PC-9 (cell line): ENCODE measurements at regions of chr9 and their contacts with region 1.

Region 1: DNA sequence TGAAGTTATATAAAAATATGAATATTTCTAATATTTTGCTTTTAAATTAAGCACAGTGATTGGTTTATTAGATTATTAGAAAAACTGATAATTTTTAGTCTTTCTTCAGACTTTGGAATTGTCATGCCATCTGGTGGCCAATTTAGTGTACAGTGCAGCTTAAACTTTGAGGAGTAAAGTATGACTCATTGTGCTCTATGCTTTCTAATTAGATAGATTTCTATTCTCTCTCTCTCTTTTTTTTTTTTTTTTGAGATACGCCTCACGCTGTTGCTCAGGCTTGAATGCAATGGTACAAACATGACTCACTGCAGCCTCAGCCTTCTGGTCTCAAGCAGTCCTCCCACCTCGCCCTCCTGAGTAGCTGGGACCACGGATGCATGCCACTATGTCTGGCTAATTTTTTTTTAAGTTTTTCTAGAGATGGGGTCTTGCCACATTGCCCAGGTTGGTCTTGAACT is 42.1 kb upstream of the GPR21 start:
- DNase-seq: peak; percentile 29 to 80
- H3K4me3 ChIP-seq: no peak overlapping the region
- H3K27ac ChIP-seq: no peak overlapping the region
- H3K4me1 ChIP-seq: no peaks in the 10 kb centered on the region
- H3K27me3 ChIP-seq: no peaks in the 10 kb centered on the region
- CTCF ChIP-seq: peak; percentile 82

Region 2: GRCh38 chr9:122346478-122347362 is 644.7 kb before region 1 on chr9:
- CTCF ChIA-PET with region 1: no interaction called
- POLR2A ChIA-PET with region 1: no interaction called
- intact Hi-C with region 1: no loop called
- DNase-seq: peak in 1 of 2 experiments; percentile 20
- H3K4me3 ChIP-seq: peak overlapping the region; percentile 39; the same call in 1 of the 2 replicates
- H3K27ac ChIP-seq: no peak overlapping the region
- H3K4me1 ChIP-seq: no peaks in the 10 kb centered on the region
- H3K27me3 ChIP-seq: peaks cover 24% of the 10 kb centered on the region
- CTCF ChIP-seq: no peak

Region 3: DNA sequence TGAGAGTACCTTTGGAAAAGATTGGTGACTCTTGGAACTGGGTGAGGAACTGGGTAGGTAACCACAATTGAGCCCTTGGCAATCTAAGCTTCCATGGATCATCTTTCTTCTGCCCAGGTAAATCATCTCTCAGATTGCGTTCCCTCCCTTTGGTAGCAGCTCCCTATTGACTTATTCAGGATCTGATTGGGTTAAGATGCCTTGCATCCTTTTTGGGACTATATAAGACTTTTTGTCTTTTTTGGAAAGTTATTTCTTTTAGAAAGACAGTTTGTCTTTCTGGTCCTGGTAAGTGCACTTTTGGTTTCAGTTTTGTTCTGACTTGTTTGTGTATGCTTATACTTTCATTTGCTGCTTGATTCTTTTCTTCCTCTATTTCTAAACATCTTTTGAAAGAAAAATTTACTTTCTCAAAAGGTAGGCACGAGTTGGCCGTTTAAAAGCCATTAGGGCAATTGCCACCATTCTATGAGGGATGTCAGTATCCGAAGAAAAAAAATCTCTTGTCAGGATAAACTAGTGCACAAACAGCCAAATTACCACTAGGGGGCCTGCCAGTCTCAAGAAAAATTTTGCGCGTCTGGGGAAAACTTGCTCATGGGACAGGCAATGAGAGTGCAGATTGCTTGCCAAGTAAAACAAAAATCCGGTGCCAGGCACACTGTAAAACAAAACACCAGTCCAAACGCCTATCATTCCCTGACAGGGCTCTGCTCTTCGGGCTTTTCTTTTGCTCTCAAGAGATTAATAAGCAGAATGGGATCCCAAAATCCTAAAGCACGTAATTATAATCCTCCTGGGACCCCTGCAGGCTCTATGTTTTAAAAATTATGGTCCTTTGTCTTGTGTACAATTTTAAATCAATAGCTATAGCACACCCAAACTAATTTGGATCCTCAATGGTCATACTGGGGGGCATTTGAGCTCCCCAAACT is 526.5 kb before region 1 on chr9:
- CTCF ChIA-PET with region 1: no interaction called
- POLR2A ChIA-PET with region 1: no interaction called
- intact Hi-C with region 1: loop called (anchors 1 kb)
- DNase-seq: peak; percentile 50 to 74
- H3K4me3 ChIP-seq: peak overlapping the region; percentile 51; the same call in 1 of the 2 replicates
- H3K27ac ChIP-seq: no peak overlapping the region
- H3K4me1 ChIP-seq: no peaks in the 10 kb centered on the region
- H3K27me3 ChIP-seq: peaks cover 21% of the 10 kb centered on the region; the same call in 1 of the 2 replicates
- CTCF ChIP-seq: peak; percentile 89

Region 4: GRCh38 chr9:122835313-122835731 is 156.1 kb before region 1 on chr9:
- CTCF ChIA-PET with region 1: interaction called, 11 read pairs
- POLR2A ChIA-PET with region 1: no interaction called
- intact Hi-C with region 1: no loop called
- DNase-seq: no peak
- H3K4me3 ChIP-seq: no peak overlapping the region
- H3K27ac ChIP-seq: no peak overlapping the region
- H3K4me1 ChIP-seq: no peaks in the 10 kb centered on the region
- H3K27me3 ChIP-seq: no peaks in the 10 kb centered on the region
- CTCF ChIP-seq: no peak

Region 5: DNA sequence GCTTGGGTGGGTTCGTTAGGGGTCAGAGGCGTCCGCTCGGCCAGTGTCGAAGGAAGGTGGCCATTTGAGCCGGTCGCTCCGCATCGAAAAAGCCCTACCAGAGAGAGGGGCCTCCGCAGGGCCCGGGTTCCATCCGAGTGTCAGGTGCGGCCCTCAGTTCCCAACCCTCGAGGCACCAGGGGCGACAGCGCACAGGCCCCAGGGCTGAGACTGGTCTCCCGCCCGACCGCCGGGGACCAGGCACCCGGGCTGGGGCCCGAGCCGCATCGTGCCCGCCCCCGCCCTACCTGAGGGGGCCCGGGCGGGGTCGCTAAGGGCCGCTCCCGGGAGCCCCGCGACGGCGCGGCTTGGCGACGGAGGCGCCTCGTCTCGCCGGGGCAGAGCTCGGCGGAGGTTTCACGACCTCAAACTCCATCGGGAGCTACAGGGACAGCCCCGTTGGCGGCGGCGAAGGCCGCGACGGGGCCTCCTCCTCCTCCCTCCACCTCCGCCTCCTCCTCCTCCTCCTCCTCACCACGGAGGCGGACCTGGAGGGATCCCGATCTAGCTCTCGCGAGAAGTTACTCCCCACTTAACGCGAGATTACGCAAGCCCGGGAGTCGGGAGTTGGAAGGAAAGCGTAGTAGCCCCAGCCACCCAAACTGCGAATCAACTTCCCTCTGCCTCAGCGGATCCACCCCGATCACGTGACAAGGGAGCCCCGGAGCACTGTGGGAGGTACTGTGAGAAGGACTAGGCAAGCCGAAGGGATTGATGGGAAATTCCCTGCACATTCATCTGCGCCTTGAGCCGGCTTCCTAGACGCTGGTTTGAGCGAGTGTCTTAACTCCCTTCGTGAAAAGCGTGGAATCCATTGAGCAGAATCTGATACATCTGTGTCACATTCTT is 86.3 kb before region 1 on chr9 and contains the start of gene RC3H2:
- CTCF ChIA-PET with region 1: no interaction called
- POLR2A ChIA-PET with region 1: interaction called, 5 read pairs
- intact Hi-C with region 1: loop called (anchors 1 kb)
- DNase-seq: peak; percentile 98 to 99
- H3K4me3 ChIP-seq: peak within 1 kb of the TSS; percentile 100
- H3K27ac ChIP-seq: peak within 1 kb of the TSS; percentile 80
- H3K4me1 ChIP-seq: peaks cover 19% of the 10 kb centered on the region
- H3K27me3 ChIP-seq: no peaks in the 10 kb centered on the region
- CTCF ChIP-seq: no peak
- total RNA-seq, gene RC3H2: 58.8 and 59.3 TPM in 2 replicates

Region 6: GRCh38 chr9:122912964-122913673 is 78.3 kb before region 1 on chr9 and contains the start of gene ZBTB6:
- CTCF ChIA-PET with region 1: interaction called, 7 read pairs
- POLR2A ChIA-PET with region 1: interaction called, 21 read pairs
- intact Hi-C with region 1: loop called (anchors 2 kb)
- DNase-seq: peak; percentile 77 to 78
- H3K4me3 ChIP-seq: peak within 1 kb of the TSS; percentile 74
- H3K27ac ChIP-seq: peak within 1 kb of the TSS; percentile 76
- H3K4me1 ChIP-seq: peaks cover 11% of the 10 kb centered on the region
- H3K27me3 ChIP-seq: no peaks in the 10 kb centered on the region
- CTCF ChIP-seq: no peak
- total RNA-seq, gene ZBTB6: 7.7 and 8.7 TPM in 2 replicates

Region 7: GRCh38 chr9:122931226-122932121 is 59.9 kb before region 1 on chr9 and contains the start of gene ZBTB26:
- CTCF ChIA-PET with region 1: no interaction called
- POLR2A ChIA-PET with region 1: no interaction called
- intact Hi-C with region 1: loop called (anchors 5 kb)
- DNase-seq: peak; percentile 90 to 96
- H3K4me3 ChIP-seq: peak within 1 kb of the TSS; percentile 76
- H3K27ac ChIP-seq: peak within 1 kb of the TSS; percentile 42
- H3K4me1 ChIP-seq: peaks cover 18% of the 10 kb centered on the region
- H3K27me3 ChIP-seq: no peaks in the 10 kb centered on the region
- CTCF ChIP-seq: no peak
- total RNA-seq, gene ZBTB26: 10.2 and 12.2 TPM in 2 replicates

Region 8: GRCh38 chr9:122978601-122979000 is 12.8 kb before region 1 on chr9:
- CTCF ChIA-PET with region 1: no interaction called
- POLR2A ChIA-PET with region 1: no interaction called
- intact Hi-C with region 1: no loop called
- DNase-seq: no peak
- H3K4me3 ChIP-seq: no peak overlapping the region
- H3K27ac ChIP-seq: no peak overlapping the region
- H3K4me1 ChIP-seq: no peaks in the 10 kb centered on the region
- H3K27me3 ChIP-seq: no peaks in the 10 kb centered on the region
- CTCF ChIP-seq: no peak

Region 9: DNA sequence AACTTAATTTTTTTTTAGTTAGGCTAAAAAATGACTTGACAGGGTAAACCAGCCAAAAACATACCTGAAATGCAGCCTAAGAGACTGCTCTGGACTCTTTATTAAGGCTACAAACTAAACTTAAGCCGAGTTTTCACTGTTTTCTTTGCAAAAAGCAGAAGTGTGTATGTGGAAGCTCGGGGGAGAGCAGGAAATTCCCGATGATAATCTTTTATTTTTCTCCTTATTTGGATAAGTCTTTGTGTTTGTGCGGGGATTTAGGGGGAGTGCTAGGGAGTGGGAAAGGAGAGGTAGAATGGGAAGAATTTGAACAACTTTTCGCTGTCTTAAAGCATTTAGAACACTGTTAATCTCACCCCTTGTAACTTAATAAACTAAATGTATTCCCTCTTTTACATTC is 11.4 kb after region 1 on chr9:
- CTCF ChIA-PET with region 1: interaction called, 7 read pairs
- POLR2A ChIA-PET with region 1: interaction called, 13 read pairs
- intact Hi-C with region 1: no loop called
- DNase-seq: no peak
- H3K4me3 ChIP-seq: no peak overlapping the region
- H3K27ac ChIP-seq: no peak overlapping the region
- H3K4me1 ChIP-seq: no peaks in the 10 kb centered on the region
- H3K27me3 ChIP-seq: no peaks in the 10 kb centered on the region
- CTCF ChIP-seq: no peak

Region 10: GRCh38 chr9:123234853-123235252 is 243.5 kb after region 1 on chr9:
- CTCF ChIA-PET with region 1: no interaction called
- POLR2A ChIA-PET with region 1: no interaction called
- intact Hi-C with region 1: no loop called
- DNase-seq: no peak
- H3K4me3 ChIP-seq: no peak overlapping the region
- H3K27ac ChIP-seq: no peak overlapping the region
- H3K4me1 ChIP-seq: no peaks in the 10 kb centered on the region
- H3K27me3 ChIP-seq: no peaks in the 10 kb centered on the region
- CTCF ChIP-seq: no peak

Region 11: DNA sequence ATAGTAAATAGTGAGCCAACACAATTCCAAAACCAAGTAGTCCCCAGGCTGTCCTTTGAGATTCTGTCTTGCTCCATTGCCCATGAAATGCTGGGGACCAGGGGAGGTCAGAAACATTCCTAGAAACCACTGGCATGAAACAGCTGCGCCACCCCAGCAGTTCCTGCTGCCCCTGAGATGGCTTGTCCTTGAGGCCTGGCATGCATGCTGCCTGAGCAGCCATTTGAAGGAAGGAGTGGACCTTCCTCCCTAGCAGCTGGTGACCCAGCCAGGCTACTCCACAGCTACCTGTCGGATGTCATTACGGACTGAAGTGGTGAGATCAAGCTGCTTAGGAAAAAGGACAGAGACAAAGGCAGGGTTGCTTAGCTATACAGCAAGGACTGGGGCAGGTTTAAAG is 677.9 kb after region 1 on chr9:
- CTCF ChIA-PET with region 1: no interaction called
- POLR2A ChIA-PET with region 1: no interaction called
- intact Hi-C with region 1: no loop called
- DNase-seq: no peak
- H3K4me3 ChIP-seq: no peak overlapping the region
- H3K27ac ChIP-seq: no peak overlapping the region
- H3K4me1 ChIP-seq: no peaks in the 10 kb centered on the region
- H3K27me3 ChIP-seq: no peaks in the 10 kb centered on the region
- CTCF ChIP-seq: no peak